A673 (cell line): ENCODE measurements at regions of chr1 and their contacts with region 1.

Region 1: DNA sequence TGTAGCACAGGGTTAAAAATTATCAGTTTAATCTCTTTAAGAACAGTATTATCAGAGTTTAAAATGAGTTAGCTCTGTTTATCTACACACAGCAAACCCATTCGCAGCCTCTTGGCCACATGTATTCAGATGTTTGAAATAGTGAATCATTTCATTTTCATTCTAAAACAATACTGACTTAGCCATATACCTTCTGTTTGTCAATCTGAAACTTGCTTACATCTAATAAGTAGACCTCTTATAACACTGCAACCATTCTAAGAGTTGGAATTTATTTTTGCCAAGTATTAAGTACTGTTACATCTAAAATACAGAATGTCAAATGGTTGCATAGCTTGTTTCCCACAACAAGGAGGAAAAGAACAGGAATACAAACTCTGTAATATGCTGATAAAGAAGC is 25.4 kb downstream of the ANGEL2 start:
- DNase-seq: no peak
- H3K4me3 ChIP-seq: no peak overlapping the region
- H3K27ac ChIP-seq: no peak overlapping the region
- H3K4me1 ChIP-seq: no peaks in the 10 kb centered on the region
- H3K27me3 ChIP-seq: no peaks in the 10 kb centered on the region
- CTCF ChIP-seq: no peak

Region 2: DNA sequence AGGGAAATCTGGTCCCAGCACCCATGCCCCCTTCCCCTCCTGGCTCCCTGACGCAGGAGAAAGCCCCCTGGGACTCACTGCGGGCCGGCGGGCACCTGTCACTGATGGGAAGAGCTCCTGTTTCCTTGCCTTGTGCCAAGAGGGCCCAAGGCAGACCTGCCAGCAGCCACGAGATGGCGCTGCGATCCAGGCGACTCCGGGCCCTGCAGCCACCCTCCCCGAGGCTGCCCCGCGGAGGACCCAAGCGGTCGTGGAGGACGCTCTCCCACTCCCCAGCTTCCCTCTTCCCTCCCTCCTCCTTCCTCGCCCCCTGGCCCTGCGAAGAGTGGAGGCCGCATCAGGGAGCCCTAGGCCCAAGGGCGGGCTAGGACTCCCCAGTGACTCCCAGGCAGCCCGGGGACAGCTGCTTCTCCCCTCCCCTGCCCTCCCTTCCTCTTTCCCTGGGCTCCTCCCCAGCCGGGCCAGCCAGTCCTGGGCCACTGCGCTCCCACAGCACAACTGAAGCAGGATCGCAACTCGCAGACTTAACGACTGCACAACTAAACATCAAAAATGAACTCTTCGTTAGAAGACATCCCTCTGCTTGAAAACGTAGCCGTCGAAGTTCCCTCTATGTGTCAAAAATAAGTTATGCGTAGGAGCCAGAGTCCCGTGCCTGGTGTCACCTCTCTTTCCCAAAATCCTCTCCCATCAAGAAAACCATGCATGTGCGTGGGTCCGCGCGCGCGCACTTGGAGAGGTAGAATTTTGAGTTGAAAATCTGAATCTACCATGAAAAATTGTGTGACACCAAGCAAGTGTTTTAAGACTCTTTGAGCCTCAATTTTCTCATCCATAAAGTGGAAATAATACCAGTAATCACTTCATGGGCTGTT is 324.8 kb before region 1 on chr1:
- CTCF ChIA-PET with region 1: interaction called, 4 read pairs
- POLR2A ChIA-PET with region 1: no interaction called
- intact Hi-C with region 1: loop called (anchors 1 kb)
- DNase-seq: peak; percentile 87
- H3K4me3 ChIP-seq: peak overlapping the region; percentile 50
- H3K27ac ChIP-seq: peak overlapping the region; percentile 49
- H3K4me1 ChIP-seq: peaks cover 17% of the 10 kb centered on the region
- H3K27me3 ChIP-seq: no peaks in the 10 kb centered on the region
- CTCF ChIP-seq: peak; percentile 97

Region 3: DNA sequence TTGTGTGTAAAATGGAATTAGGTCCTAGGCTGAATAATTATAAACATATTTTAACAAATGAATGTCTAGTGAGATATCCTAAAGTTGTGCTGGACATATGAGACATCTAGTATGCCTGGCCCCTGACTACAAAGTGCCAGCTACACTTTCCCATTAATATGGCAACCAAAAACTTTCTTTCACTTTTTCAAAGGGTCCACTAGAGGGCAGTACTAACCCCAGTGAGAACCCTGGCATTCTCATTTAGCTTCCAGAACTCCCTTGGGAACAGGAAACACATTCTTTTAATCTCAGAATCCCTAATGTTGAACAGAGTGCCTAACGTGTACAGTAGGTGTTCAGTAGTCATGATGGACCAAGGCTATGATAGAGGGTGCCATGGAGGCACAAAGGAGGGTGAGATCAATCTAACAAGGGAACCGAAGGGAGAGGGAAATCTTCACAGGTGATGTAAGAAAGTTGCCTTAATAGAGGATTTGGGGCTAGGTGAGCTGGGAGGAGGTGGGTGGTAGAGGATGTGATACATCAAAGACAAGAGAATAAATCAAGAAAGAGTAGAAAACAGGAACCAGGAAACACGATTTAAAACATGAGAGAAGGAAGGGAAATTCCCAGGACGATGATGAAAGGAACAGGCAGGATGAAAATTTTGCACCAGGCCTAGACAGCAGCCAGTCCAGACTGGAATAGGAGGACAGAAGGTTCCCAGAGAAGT is 240.3 kb before region 1 on chr1:
- CTCF ChIA-PET with region 1: interaction called, 7 read pairs
- POLR2A ChIA-PET with region 1: no interaction called
- intact Hi-C with region 1: loop called (anchors 10 kb)
- DNase-seq: peak; percentile 89
- H3K4me3 ChIP-seq: no peak overlapping the region
- H3K27ac ChIP-seq: no peak overlapping the region
- H3K4me1 ChIP-seq: peaks cover 14% of the 10 kb centered on the region
- H3K27me3 ChIP-seq: no peaks in the 10 kb centered on the region
- CTCF ChIP-seq: peak; percentile 88

Region 4: GRCh38 chr1:212814537-212815334 is 175.5 kb before region 1 on chr1:
- CTCF ChIA-PET with region 1: no interaction called
- POLR2A ChIA-PET with region 1: no interaction called
- intact Hi-C with region 1: loop called (anchors 5 kb)
- DNase-seq: peak; percentile 26
- H3K4me3 ChIP-seq: no peak overlapping the region
- H3K27ac ChIP-seq: no peak overlapping the region
- H3K4me1 ChIP-seq: no peaks in the 10 kb centered on the region
- H3K27me3 ChIP-seq: no peaks in the 10 kb centered on the region
- CTCF ChIP-seq: peak; percentile 55; the same call in 1 of the 2 replicates

Region 5: DNA sequence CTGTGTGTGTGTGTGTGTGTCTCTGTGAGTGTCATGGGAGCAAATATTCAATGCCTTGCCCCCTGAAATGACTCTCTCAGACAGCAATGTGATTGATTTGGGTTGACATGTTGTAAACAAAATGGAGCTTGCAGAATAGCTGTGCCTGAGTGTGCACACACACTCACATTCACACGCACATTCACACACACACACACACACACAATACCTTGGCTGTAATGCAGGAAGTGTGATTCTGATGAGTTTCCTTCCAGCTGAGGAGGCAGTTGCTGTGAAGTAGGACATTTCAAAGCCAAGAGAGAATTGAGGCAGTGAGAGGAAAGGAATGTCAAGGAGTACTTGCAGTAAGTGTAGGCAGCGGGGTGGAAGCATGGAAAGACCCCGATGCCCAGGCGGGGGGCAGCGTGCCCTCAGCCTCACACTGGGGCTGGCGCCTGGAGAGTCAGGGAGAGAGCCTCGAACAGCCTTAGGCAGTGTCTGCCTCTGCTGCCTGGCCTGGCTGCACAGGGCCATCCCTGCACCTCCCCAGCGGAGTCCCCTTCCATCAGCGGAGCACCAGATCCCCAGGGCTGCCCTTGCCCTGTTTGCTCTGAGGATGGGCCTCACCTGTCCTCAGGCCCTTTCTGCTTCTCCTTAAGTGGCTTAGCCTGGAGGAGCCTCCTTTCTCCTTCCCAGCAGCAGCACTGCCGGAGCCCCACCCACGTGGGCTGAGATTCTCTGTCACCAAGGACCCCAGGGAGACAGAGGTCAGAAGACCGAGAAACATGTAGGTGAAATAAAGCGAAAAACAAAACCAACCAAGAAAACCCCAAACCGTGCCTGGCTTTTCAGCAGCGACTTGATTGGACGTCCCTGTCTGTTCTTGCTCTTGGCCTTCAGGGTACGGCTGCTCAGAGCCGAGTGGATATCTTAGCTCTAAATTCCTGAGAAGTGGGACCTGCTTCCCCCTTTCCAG is 30.7 kb before region 1 on chr1:
- CTCF ChIA-PET with region 1: no interaction called
- POLR2A ChIA-PET with region 1: no interaction called
- intact Hi-C with region 1: no loop called
- DNase-seq: no peak
- H3K4me3 ChIP-seq: no peak overlapping the region
- H3K27ac ChIP-seq: no peak overlapping the region
- H3K4me1 ChIP-seq: no peaks in the 10 kb centered on the region
- H3K27me3 ChIP-seq: no peaks in the 10 kb centered on the region
- CTCF ChIP-seq: no peak

Region 6: DNA sequence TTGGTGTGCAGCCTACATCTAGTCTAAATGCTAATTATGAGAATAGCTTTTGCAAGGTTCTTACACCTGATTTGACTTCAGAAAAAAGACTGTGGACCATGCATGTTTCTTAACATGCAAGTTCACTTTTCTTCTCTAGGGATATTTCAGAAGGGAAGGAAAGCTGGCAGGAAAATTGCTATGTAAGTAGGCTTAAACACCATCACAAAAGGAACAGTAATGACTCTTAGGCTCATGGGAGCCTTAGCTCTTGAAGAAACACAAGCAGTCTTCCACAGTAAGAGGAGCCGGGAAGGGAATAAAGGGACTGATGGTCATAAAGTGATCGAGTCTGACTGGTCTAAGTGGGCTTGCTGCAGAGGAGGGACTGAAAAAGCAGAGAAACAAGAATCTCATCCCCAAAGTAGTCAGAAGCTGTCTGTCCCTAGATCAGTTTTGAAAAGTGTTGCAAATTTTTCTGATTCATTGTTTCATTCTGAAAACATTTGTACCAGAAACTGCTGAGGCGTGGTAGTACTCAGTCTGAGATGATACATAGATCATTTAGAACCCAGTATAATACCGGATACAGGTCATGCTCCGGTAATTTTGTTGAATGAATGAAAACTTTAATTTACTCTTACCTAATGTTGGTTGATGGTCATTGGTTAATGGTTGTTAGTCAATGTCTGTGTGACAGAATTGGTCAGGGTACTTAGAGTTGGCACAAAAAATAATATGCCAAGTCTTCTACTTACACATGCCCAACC is 1331.6 kb after region 1 on chr1:
- CTCF ChIA-PET with region 1: no interaction called
- POLR2A ChIA-PET with region 1: no interaction called
- intact Hi-C with region 1: no loop called
- DNase-seq: peak; percentile 54
- H3K4me3 ChIP-seq: no peak overlapping the region
- H3K27ac ChIP-seq: no peak overlapping the region
- H3K4me1 ChIP-seq: peaks cover 12% of the 10 kb centered on the region
- H3K27me3 ChIP-seq: no peaks in the 10 kb centered on the region
- CTCF ChIP-seq: no peak